Naive thymus-derived CD4-positive, alpha-beta T cell (primary cell): ENCODE measurements at regions of chr19 and their contacts with region 1.

Region 1: DNA sequence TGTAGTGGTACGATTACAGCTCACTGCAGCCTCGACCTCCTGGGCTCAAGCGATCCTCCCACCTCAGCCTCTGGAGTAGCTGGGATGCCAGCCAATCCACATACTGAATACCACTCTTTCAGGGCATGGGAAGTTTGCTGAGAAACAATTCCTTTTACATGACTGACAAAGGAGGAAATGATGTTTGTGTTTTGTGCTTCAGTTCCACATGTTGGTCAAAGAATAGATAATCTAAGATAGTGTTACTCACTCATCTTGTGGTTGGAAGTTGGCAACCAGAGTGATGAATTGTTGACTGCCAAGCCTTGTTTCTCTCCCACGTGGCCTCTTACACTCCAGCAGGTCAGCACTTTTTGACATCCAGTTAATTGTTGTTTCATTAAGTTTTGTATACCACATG is 7.6 kb downstream of the MBD3L2B start:
- DNase-seq: no peak
- ATAC-seq: peak; percentile 79
- H3K4me3 ChIP-seq: no peak overlapping the region
- H3K4me3 Mint-ChIP-seq: no peak overlapping the region
- H3K27ac ChIP-seq: no peak overlapping the region
- H3K27ac Mint-ChIP-seq: peak overlapping the region in 2 of 9 donors; percentile 0 to 10
- H3K4me1 ChIP-seq: peaks cover 13 to 18% of the 10 kb centered on the region in 2 donors
- H3K4me1 Mint-ChIP-seq: peaks cover 9 to 45% (median 34%) of the 10 kb centered on the region in 7 donors
- H3K27me3 ChIP-seq: no peaks in the 10 kb centered on the region
- H3K27me3 Mint-ChIP-seq: no peaks in the 10 kb centered on the region

Region 2: DNA sequence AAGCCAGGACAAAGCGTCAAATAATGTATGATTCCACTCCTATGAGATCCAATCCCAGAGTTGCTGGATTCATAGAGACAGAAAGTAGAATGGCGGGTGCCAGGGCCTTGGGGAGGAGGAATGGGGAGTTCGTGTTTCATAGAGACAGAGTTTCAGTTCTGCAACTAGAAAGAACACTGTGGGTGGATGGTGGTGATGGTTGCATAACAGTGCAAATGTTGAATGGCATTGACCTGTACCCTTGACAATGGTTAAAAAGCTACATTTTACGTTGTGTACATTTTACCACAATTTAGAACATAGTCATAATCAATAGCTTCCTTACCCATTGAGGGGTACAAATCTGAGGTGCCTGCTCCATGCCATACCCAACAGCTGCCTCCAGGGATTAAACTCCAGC is 25.8 kb before region 1 on chr19:
- CTCF ChIA-PET with region 1: no interaction called
- POLR2A ChIA-PET with region 1: no interaction called
- intact Hi-C with region 1: no loop called
- DNase-seq: no peak
- ATAC-seq: no peak
- H3K4me3 ChIP-seq: no peak overlapping the region
- H3K4me3 Mint-ChIP-seq: peak overlapping the region in 1 of 10 donors; percentile 2
- H3K27ac ChIP-seq: no peak overlapping the region
- H3K27ac Mint-ChIP-seq: peak overlapping the region in 1 of 9 donors; percentile 4
- H3K4me1 ChIP-seq: no peaks in the 10 kb centered on the region
- H3K4me1 Mint-ChIP-seq: peaks cover 0 to 3% (median 0%) of the 10 kb centered on the region in 7 donors
- H3K27me3 ChIP-seq: no peaks in the 10 kb centered on the region
- H3K27me3 Mint-ChIP-seq: no peaks in the 10 kb centered on the region

Region 3: DNA sequence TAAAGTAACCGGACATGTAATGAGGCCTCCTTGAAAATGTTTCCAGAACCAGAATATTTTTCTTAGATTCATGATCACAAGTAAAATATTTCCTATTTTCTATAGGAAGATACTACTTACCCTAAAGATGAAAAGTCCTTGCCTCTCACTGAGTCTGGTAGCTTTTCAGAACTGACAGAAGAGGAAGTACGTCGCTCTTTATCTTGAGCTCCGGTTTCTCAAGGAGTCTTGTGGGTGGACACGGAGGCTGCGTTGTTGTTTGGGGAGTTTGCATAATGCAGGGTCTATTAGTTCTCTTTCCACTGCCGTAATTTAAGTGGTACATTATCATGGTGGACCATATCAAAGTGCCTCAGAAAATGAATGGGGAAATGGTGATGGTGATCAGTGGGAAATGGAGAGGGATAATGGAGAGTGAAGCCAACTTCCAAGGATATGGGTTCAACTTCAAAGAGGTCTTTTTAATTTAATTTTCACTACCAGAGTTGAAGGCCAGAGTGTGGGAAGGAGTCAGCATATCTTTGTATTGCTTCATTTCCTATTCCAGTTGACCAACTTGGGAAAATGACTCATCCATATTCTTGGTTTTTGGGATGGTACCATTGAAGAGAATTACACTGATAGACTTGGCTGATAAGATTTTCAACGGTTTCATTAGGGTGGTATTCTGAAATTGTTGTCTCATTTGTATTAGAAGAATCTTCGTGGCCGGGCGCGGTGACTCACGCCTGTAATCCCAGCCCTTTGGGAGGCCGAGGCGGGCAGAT is 15.8 kb before region 1 on chr19:
- CTCF ChIA-PET with region 1: no interaction called
- POLR2A ChIA-PET with region 1: interaction called, 3 read pairs
- intact Hi-C with region 1: loop called in 1 of 2 experiments (anchors 1 kb)
- DNase-seq: peak in 4 of 9 donors; percentile 17 to 28 (median 24)
- ATAC-seq: peak; percentile 76
- H3K4me3 ChIP-seq: peak overlapping the region; percentile 15
- H3K4me3 Mint-ChIP-seq: peak overlapping the region; percentile 61 to 90 (median 84)
- H3K27ac ChIP-seq: peak overlapping the region; percentile 67
- H3K27ac Mint-ChIP-seq: peak overlapping the region in 8 of 9 donors; percentile 70 to 97 (median 90)
- H3K4me1 ChIP-seq: no peaks in the 10 kb centered on the region
- H3K4me1 Mint-ChIP-seq: peaks cover 15 to 62% (median 52%) of the 10 kb centered on the region in 7 donors
- H3K27me3 ChIP-seq: no peaks in the 10 kb centered on the region
- H3K27me3 Mint-ChIP-seq: peaks cover 0 to 2% (median 0%) of the 10 kb centered on the region in 5 donors

Region 4: DNA sequence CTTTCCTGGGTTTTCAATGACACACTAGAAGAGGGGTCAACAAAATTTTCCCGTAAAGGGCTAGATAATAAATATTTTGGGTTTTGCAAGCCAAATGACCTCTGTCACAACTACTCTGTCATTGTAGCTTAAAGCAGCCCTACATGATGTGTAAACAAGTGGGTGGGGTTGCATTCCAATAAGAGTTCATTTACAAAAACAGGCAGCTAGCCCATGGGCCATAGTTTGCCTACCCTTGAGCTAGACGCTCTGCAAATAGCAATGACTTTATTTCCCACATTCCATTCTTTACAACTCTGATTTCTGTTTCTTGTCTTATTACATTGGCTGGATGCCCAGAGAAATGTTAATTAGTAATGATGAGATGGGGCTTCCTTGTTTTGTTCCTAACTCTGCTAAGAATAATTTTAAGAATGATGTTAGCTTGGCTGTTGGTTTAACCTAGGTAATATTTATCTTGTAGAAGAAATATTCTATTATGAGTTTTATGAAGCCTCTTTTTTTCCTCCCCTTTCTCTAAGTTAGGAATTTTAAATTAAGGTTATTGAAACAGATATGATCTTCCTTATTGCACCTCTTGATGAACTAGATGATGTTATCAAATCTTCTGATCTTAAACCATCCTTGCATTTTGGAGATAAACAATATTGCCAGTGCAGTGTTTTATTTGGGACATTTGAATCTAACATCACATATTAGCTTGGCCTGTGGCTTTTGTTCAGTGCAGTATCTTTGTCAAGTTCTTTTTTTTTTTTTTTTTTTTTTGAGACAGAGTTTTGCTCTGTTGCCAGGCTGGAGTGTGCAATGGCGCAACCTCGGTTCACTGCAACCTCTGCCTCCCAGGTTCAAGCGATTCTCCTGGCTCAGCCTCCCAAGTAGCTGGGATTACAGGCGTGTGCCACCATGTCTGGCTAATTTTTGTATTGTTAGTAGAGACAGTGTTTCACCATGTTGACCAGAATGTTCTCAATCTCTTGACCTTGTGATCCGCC is 132.1 kb after region 1 on chr19:
- CTCF ChIA-PET with region 1: no interaction called
- POLR2A ChIA-PET with region 1: no interaction called
- intact Hi-C with region 1: no loop called
- DNase-seq: no peak
- ATAC-seq: no peak
- H3K4me3 ChIP-seq: no peak overlapping the region
- H3K4me3 Mint-ChIP-seq: no peak overlapping the region
- H3K27ac ChIP-seq: no peak overlapping the region
- H3K27ac Mint-ChIP-seq: no peak overlapping the region
- H3K4me1 ChIP-seq: no peaks in the 10 kb centered on the region
- H3K4me1 Mint-ChIP-seq: no peaks in the 10 kb centered on the region
- H3K27me3 ChIP-seq: no peaks in the 10 kb centered on the region
- H3K27me3 Mint-ChIP-seq: no peaks in the 10 kb centered on the region